ENCODE measurements at regions of chr7 and their contacts with region 1.

Region 1: DNA sequence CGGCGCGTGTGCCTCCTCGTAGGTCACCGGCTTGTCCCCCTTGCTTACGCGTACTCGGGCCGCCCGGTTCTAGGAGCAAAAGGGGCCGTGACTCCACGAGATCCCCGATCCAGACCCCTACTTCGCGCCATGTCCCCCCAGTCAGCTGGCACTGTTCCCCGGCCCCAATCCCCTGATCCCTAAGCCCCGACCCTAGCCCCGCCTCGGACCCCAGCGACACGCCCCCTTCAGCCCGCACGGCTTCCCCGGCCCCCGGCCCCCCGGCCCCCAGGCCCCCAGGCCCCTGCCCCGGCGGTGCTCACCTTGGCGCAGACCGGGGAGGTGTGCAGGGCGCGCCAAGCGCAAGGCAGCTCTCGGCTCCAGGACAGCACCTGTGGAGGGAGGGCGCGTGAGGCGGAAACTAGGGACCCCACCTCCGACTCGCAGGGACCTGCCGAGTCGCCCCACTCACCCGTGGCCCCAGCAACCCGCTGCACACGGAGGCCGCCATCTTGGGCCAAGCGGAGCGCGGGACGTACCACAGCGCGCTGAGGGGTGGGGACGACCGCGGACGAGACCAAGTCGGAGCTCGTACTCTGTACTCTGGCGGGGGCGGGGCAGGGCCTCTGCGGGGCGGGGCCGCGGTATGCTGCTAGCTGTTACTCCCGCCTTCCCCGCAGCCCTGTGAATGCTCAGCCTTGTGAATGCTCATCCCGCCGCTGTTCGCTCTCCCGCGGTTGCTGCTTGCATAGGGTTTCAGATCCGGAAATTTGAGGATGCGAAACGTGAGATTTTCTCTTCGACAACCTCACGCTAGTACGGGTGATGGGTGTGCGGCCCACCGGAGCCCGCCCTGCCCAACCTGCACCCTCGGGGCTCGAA is at the start of gene MRPS24:
- DNase-seq: peak; percentile 91
- H3K4me3 ChIP-seq: peak within 1 kb of the TSS; percentile 89
- H3K27ac ChIP-seq: peak within 1 kb of the TSS; percentile 100
- H3K27me3 ChIP-seq: no peaks in the 10 kb centered on the region
- CTCF ChIP-seq: no peak
- polyA plus RNA-seq, gene MRPS24: 134 and 184 TPM in 2 replicates

Region 2: GRCh38 chr7:43152696-43153095 is 716.5 kb before region 1 on chr7:
- CTCF ChIA-PET with region 1: no interaction called
- POLR2A ChIA-PET with region 1: interaction called, 11 read pairs
- DNase-seq: no peak
- H3K4me3 ChIP-seq: no peak overlapping the region
- H3K27ac ChIP-seq: no peak overlapping the region
- H3K27me3 ChIP-seq: peaks cover 3% of the 10 kb centered on the region
- CTCF ChIP-seq: no peak

Measured in AG04450 (cell line).